Lower leg skin (tissue), 4 donors: ENCODE measurements at regions of chr9 and their contacts with region 1.

Region 1: GRCh38 chr9:29685531-29685930 is 2112.2 kb upstream of the C9orf72 start:
- DNase-seq: no peak
- H3K4me3 ChIP-seq: no peak overlapping the region
- CTCF ChIP-seq: no peak
- POLR2A ChIP-seq: no peak

Region 2: DNA sequence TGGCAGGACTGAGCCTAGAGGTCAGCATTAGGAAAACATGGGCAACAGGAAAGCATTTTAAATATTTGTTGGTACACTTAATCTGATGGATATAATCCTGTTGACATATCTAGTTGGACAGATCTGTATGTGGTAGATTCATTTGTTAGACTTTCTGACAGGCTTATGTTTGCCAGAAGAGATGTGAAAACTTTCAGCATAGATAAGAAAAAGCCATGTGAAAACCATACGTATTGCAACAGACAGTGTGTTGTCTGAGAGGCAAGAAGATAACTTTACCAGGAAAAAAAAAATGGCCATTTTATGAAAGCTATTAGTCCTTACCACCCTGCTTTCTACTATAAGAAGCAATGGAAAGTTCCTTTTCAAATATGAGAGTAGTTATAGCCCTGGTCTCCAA is 210.1 kb before region 1 on chr9:
- intact Hi-C with region 1: loop called (anchors 5 kb)
- DNase-seq: no peak
- H3K4me3 ChIP-seq: no peak overlapping the region
- CTCF ChIP-seq: no peak
- POLR2A ChIP-seq: no peak

Region 3: GRCh38 chr9:29613773-29614172 is 71.8 kb before region 1 on chr9:
- intact Hi-C with region 1: no loop called
- DNase-seq: no peak
- H3K4me3 ChIP-seq: no peak overlapping the region
- CTCF ChIP-seq: no peak
- POLR2A ChIP-seq: no peak

Region 4: DNA sequence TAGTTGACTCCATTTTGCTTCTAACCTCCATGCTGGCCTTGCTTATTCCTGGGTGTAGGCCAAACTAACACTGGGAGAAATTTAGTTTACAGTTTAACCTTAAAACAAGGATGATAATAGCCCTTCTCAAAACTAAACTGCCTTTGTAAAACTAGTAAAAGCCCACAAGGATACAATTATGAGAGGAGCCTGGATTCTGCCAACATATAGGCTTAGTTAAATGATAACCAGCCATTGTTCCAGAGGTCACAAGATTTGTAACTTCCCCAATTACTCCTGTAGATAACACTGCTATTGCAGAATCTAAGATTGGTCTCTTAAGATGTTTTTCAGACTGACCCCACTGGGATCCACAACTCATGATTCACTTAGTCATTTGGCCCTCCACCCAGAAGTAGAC is 188.0 kb after region 1 on chr9:
- intact Hi-C with region 1: no loop called
- DNase-seq: no peak
- H3K4me3 ChIP-seq: no peak overlapping the region
- CTCF ChIP-seq: no peak
- POLR2A ChIP-seq: no peak